ENCODE measurements at regions of chr2 and their contacts with region 1.

Region 1: DNA sequence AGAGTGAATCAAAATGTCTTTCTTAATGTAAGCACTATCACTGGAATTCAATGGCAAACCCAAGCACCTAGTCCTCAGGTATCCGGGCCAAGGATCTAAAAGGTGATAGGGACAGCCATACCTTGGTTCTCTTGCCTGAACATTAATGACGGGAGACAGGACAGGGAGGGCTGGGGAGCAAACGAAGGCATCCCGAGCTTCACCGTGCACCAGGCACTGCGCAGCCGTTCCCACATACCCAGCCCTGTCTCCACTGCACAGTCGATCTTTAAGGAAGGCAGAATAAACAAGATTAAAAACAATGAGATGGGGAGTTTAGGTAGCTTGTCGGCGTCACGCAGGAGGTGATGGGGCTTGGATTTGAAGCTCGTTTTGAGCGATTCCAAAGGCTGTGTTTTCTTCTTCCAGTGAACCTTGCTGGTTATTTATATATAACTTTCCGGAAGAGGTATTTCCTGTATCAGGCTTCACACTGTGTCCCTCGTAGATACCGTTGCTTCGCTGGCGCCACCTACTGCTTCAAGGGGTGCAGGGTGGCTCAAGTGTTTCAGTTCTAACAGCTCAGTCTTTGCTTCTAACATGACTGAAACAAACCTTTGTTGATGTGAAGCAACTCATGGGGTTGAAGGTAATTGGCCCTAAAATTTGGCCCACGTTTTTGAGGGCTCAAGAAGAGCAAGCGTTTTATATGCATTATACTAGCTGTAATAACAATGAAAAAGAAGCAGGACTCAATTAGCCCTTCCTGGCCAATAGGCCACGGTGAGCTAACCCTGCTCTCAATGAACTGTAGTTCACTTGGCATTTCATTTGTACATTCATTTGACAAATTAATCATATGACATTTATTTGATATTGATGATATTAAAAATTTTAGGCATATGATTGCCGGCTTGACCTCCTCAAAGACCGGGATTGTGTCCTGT is 77.4 kb downstream of the DCDC2C start:
- DNase-seq: no peak
- H3K4me3 ChIP-seq: peak overlapping the region in 1 of 4 donors; percentile 10
- H3K27ac ChIP-seq: no peak overlapping the region
- H3K4me1 ChIP-seq: no peaks in the 10 kb centered on the region
- H3K27me3 ChIP-seq: no peaks in the 10 kb centered on the region
- CTCF ChIP-seq: peak in 1 of 4 experiments; percentile 34
- EP300 ChIP-seq: no peak
- POLR2A ChIP-seq: no peak

Region 2: GRCh38 chr2:3728104-3729054 is 52.4 kb before region 1 on chr2:
- intact Hi-C with region 1: loop called (anchors 5 kb)
- DNase-seq: no peak
- H3K4me3 ChIP-seq: no peak overlapping the region
- H3K27ac ChIP-seq: no peak overlapping the region
- H3K4me1 ChIP-seq: peaks cover 0 to 7% (median 0%) of the 10 kb centered on the region in 4 donors
- H3K27me3 ChIP-seq: peaks cover 0 to 7% (median 0%) of the 10 kb centered on the region in 3 donors
- CTCF ChIP-seq: peak; percentile 23 to 53 (median 34)
- EP300 ChIP-seq: no peak
- POLR2A ChIP-seq: no peak

Region 3: GRCh38 chr2:3805201-3805939 is 24.6 kb after region 1 on chr2:
- intact Hi-C with region 1: no loop called
- DNase-seq: no peak
- H3K4me3 ChIP-seq: no peak overlapping the region
- H3K27ac ChIP-seq: no peak overlapping the region
- H3K4me1 ChIP-seq: no peaks in the 10 kb centered on the region
- H3K27me3 ChIP-seq: no peaks in the 10 kb centered on the region
- CTCF ChIP-seq: no peak
- EP300 ChIP-seq: no peak
- POLR2A ChIP-seq: no peak

Region 4: GRCh38 chr2:3919622-3920021 is 138.9 kb after region 1 on chr2:
- intact Hi-C with region 1: no loop called
- DNase-seq: no peak
- H3K4me3 ChIP-seq: no peak overlapping the region
- H3K27ac ChIP-seq: no peak overlapping the region
- H3K4me1 ChIP-seq: no peaks in the 10 kb centered on the region
- H3K27me3 ChIP-seq: no peaks in the 10 kb centered on the region
- CTCF ChIP-seq: no peak
- EP300 ChIP-seq: no peak
- POLR2A ChIP-seq: no peak

Measured in sigmoid colon (tissue), 7 donors.